ENCODE measurements at regions of chr17 and their contacts with region 1.

Region 1: DNA sequence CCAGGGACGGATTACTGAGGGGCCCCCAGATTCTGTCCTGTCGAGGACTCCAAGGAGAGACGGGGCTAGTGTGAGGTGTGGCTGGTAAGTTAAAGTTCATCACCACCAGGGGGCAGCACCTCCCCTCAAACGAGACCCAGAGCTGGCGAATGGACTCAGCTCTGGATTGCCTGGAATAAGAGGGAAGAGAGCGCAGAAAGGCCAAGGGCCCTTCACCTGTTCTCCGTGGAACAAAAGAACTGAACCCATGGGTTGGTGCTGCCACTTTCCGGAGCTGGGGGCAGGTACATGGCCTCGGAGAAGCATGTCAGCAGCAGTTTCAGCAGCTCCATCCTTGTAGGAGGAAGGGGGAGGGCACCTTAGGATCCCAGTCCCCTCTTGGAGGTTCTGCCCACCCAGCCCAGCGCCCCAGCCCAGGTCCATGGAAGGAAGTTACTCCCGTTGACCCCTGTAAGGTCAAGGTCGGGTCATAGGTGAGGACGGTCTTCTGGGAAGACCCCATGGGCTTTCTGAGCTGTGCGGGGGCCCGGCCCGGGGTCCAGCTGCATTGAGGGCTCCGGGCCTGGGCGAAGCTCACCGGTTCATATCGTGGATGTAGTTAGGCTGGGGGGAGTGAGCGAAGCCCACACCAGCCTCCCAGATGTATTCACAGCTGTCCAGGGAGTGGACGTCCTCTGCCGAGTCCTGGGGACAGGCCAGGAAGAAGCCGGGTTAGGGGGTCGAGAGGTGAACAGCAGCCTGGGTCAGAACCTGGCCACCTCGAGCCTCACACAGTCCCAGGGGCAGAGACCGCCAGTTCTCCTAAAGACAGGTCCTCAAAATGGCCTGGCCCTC is 10.7 kb downstream of the HID1 start:
- DNase-seq: peak; percentile 82
- ATAC-seq: peak; percentile 86
- H3K4me3 ChIP-seq: no peak overlapping the region
- H3K27ac ChIP-seq: no peak overlapping the region
- H3K4me1 ChIP-seq: 0 out of 2 replicates have a peak, but pooled peaks cover 1% of the 10 kb centered on the region
- H3K27me3 ChIP-seq: peaks cover 4% of the 10 kb centered on the region; the same call in 1 of the 2 replicates
- CTCF ChIP-seq: peak; percentile 77
- POLR2A ChIP-seq: no peak
- RAD21 ChIP-seq: peak; percentile 86

Region 2: DNA sequence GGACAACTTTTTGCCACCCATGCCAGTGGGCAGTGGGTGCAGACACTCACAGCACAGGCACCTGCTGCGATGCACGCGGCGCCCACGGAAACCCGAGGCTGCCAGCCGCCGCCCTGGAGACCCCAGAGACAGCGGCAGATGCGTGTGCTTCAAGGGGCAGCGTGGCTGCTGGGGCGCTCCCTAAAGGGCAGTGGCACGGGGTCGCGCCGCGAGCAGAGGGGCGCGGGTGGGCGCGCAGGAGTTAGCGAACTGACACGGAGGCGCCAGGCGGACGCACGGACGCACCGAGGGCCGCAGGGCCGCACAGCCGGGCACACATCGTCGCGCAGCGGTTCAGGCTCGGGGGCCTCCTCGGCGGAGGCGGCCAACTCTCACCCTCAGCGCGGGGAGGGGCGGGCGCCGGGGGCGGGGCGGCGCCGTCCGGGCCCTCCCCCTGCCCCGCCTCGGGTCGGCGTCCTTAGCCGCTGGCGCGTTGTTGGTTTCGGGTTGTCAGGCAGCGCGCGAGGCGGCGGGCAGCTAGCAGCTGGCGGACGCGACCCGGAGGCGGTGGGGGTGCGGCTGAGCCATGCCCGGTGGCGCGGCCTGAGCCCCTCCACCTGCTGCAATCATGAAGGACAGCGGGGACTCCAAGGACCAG is 636.0 kb before region 1 on chr17 and contains the start of gene KIF19:
- CTCF ChIA-PET with region 1: no interaction called
- POLR2A ChIA-PET with region 1: no interaction called
- dilution Hi-C with region 1: no loop called
- in situ Hi-C with region 1: no loop called
- intact Hi-C with region 1: no loop called
- DNase-seq: no peak
- ATAC-seq: peak; percentile 46
- H3K4me3 ChIP-seq: no peak within 1 kb of the TSS
- H3K27ac ChIP-seq: no peak within 1 kb of the TSS
- H3K4me1 ChIP-seq: no peaks in the 10 kb centered on the region
- H3K27me3 ChIP-seq: peaks cover 8% of the 10 kb centered on the region
- CTCF ChIP-seq: no peak
- POLR2A ChIP-seq: no peak
- RAD21 ChIP-seq: no peak
- total RNA-seq, gene KIF19: not detected in 2 replicates

Region 3: GRCh38 chr17:74776044-74776977 is 185.6 kb before region 1 on chr17 and contains the start of gene NAT9:
- CTCF ChIA-PET with region 1: interaction called, 11 read pairs
- POLR2A ChIA-PET with region 1: no interaction called
- dilution Hi-C with region 1: no loop called
- in situ Hi-C with region 1: no loop called
- intact Hi-C with region 1: no loop called
- DNase-seq: peak; percentile 92
- ATAC-seq: peak; percentile 95
- H3K4me3 ChIP-seq: peak within 1 kb of the TSS; percentile 73
- H3K27ac ChIP-seq: peak within 1 kb of the TSS; percentile 85
- H3K4me1 ChIP-seq: peaks cover 10% of the 10 kb centered on the region
- H3K27me3 ChIP-seq: no peaks in the 10 kb centered on the region
- CTCF ChIP-seq: no peak
- POLR2A ChIP-seq: peak; percentile 65; the same call in 1 of the 2 replicates
- RAD21 ChIP-seq: no peak
- total RNA-seq, gene NAT9: 25.8 and 48.9 TPM in 2 replicates

Region 4: GRCh38 chr17:74923533-74924249 is 38.2 kb before region 1 on chr17:
- CTCF ChIA-PET with region 1: interaction called, 10 read pairs
- POLR2A ChIA-PET with region 1: no interaction called
- dilution Hi-C with region 1: no loop called
- in situ Hi-C with region 1: no loop called
- intact Hi-C with region 1: loop called (anchors 1 kb)
- DNase-seq: peak; percentile 27
- ATAC-seq: peak; percentile 77
- H3K4me3 ChIP-seq: no peak overlapping the region
- H3K27ac ChIP-seq: no peak overlapping the region
- H3K4me1 ChIP-seq: no peaks in the 10 kb centered on the region
- H3K27me3 ChIP-seq: peaks cover 87% of the 10 kb centered on the region
- CTCF ChIP-seq: peak; percentile 66
- POLR2A ChIP-seq: no peak
- RAD21 ChIP-seq: peak; percentile 65

Region 5: DNA sequence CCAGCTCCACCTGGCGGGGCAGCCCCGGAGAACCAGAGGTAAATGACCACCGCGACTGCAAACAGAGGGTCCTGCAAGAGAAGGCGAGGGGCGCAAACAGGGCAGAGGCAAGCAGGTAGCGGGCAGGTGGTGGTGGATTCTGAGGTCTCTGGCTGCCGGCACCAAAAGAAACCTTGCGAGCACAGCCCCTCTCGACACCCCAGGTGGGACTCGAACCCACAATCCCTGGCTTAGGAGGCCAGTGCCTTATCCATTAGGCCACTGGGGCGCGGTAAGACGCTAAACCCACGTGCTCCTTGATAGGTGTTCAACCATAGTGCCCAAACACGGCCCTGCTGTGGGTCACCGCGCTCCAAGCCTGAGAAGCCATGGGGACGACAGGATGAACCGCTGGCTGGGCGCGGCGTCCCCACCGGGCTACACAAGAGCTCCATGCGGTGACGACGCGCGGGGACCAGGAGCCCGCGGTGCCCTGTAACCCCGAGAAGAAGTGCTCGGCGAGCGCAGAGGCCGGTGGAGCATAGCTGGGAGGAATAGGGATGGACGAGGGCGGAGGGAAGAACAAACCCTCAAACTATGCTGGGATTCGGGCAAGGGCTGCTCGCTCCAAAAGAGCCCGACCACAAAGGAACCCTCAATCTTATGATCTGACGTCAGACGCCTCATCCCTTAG is 72.5 kb after region 1 on chr17:
- CTCF ChIA-PET with region 1: interaction called, 9 read pairs
- POLR2A ChIA-PET with region 1: interaction called, 3 read pairs
- dilution Hi-C with region 1: no loop called
- in situ Hi-C with region 1: no loop called
- intact Hi-C with region 1: loop called (anchors 1 kb)
- DNase-seq: peak; percentile 85
- ATAC-seq: peak; percentile 61
- H3K4me3 ChIP-seq: peak overlapping the region; percentile 70
- H3K27ac ChIP-seq: peak overlapping the region; percentile 73
- H3K4me1 ChIP-seq: peaks cover 2% of the 10 kb centered on the region
- H3K27me3 ChIP-seq: no peaks in the 10 kb centered on the region
- CTCF ChIP-seq: no peak
- POLR2A ChIP-seq: no peak
- RAD21 ChIP-seq: no peak

Region 6: GRCh38 chr17:75205037-75205792 is 243.3 kb after region 1 on chr17 and contains the start of gene NUP85:
- CTCF ChIA-PET with region 1: interaction called, 9 read pairs
- POLR2A ChIA-PET with region 1: no interaction called
- dilution Hi-C with region 1: no loop called
- in situ Hi-C with region 1: loop called (anchors 10 kb)
- intact Hi-C with region 1: loop called (anchors 1 kb)
- DNase-seq: peak; percentile 89
- ATAC-seq: peak; percentile 98
- H3K4me3 ChIP-seq: peak within 1 kb of the TSS; percentile 91
- H3K27ac ChIP-seq: peak within 1 kb of the TSS; percentile 98
- H3K4me1 ChIP-seq: no peaks in the 10 kb centered on the region; the same call in 1 of the 2 replicates
- H3K27me3 ChIP-seq: no peaks in the 10 kb centered on the region
- CTCF ChIP-seq: no peak
- POLR2A ChIP-seq: peak; percentile 77
- RAD21 ChIP-seq: no peak
- total RNA-seq, gene NUP85: 26.7 and 29.4 TPM in 2 replicates

Measured in IMR-90 (cell line).